GM18951 (cell line): ENCODE measurements at regions of chr6 and their contacts with region 1.

Region 1: GRCh38 chr6:160733050-160733646 is 31.1 kb downstream of the PLG start:
- POLR2A ChIP-seq: no peak

Region 2: DNA sequence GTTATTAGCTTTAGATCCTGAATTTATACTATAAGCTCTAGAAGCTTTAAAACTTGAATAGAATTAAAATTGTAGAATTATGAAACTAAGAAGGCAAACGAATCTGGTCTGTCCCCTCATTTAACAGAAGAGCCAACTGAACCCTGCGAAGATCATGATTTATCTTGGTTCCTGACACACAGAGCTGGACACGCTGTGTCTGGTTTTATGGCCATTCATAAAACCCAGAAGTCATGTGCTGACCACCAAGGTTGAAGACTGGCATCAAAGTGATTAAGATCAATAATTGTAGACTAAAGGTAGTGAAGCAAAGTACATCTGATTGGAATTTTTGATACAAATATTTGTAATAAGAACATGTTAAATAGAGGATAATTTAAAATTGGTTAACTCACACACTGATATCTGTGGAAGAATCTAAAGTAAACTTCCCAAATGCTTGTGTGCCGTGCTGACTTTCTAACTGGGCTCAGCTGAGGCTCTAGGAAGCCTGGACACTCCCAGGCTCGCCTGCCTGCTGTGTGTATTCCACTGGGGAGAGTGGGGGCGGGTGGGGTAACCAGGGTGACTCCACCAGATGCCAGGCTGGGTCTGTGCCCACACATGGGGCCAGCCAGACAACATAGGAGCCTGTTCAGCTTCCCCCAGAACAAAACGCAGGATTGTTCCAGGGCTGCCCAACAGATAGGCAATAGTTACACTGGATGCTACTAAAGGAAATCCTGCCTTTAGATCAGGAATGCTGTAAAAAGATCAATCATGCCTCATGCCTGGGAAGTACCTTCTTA is 427.0 kb before region 1 on chr6:
- in situ Hi-C with region 1: no loop called
- POLR2A ChIP-seq: no peak

Region 3: GRCh38 chr6:161101517-161101916 is 368.4 kb after region 1 on chr6:
- in situ Hi-C with region 1: loop called (anchors 25 kb)
- POLR2A ChIP-seq: no peak

Region 4: GRCh38 chr6:161151660-161152526 is 418.7 kb after region 1 on chr6:
- in situ Hi-C with region 1: no loop called
- POLR2A ChIP-seq: no peak